Mammary epithelial cell (primary cell): ENCODE measurements at regions of chr14 and their contacts with region 1.

Region 1: DNA sequence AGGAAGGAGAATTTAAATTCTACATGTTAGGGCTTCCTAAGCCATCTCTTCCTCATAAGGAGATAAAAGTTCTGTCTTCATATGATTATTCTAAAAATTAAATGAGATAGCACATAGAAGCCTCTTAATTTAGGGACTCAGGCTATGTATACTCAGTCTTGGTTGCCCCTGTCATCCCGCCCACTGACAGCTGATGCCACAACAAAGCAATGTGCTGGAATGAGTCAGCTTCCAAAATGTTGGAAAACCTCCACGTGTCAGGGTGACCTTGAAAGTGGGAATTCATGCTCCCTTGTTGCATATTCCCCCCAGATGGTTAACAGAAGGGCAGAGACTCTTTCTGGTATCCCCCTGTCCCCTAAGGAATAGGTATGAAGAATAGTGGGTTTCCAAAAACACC is 238.0 kb upstream of the DDHD1 start:
- DNase-seq: peak; percentile 44
- H3K4me3 ChIP-seq: no peak overlapping the region
- H3K27ac ChIP-seq: peak overlapping the region; percentile 48
- H3K4me1 ChIP-seq: peaks cover 40% of the 10 kb centered on the region
- H3K27me3 ChIP-seq: no peaks in the 10 kb centered on the region
- CTCF ChIP-seq: no peak

Region 2: GRCh38 chr14:52179141-52179790 is 1211.9 kb before region 1 on chr14:
- CTCF ChIA-PET with region 1: no interaction called
- dilution Hi-C with region 1: no loop called
- in situ Hi-C with region 1: no loop called
- intact Hi-C with region 1: no loop called
- DNase-seq: no peak
- H3K4me3 ChIP-seq: no peak overlapping the region
- H3K27ac ChIP-seq: no peak overlapping the region
- H3K4me1 ChIP-seq: no peaks in the 10 kb centered on the region
- H3K27me3 ChIP-seq: no peaks in the 10 kb centered on the region
- CTCF ChIP-seq: no peak

Region 3: GRCh38 chr14:53325176-53325806 is 65.9 kb before region 1 on chr14:
- CTCF ChIA-PET with region 1: no interaction called
- dilution Hi-C with region 1: no loop called
- in situ Hi-C with region 1: no loop called
- intact Hi-C with region 1: loop called (anchors 5 kb)
- DNase-seq: peak; percentile 29
- H3K4me3 ChIP-seq: no peak overlapping the region
- H3K27ac ChIP-seq: no peak overlapping the region
- H3K4me1 ChIP-seq: peaks cover 19% of the 10 kb centered on the region
- H3K27me3 ChIP-seq: no peaks in the 10 kb centered on the region
- CTCF ChIP-seq: peak in 1 of 2 donors; percentile 34

Region 4: GRCh38 chr14:53715193-53715721 is 324.1 kb after region 1 on chr14:
- CTCF ChIA-PET with region 1: interaction called, 20 read pairs
- dilution Hi-C with region 1: no loop called
- in situ Hi-C with region 1: no loop called
- intact Hi-C with region 1: no loop called
- DNase-seq: peak; percentile 65
- H3K4me3 ChIP-seq: no peak overlapping the region
- H3K27ac ChIP-seq: no peak overlapping the region
- H3K4me1 ChIP-seq: peaks cover 7% of the 10 kb centered on the region
- H3K27me3 ChIP-seq: no peaks in the 10 kb centered on the region
- CTCF ChIP-seq: no peak